ENCODE measurements at regions of chr2 and their contacts with region 1.

Region 1: GRCh38 chr2:237408335-237409000 is 5.5 kb downstream of the COL6A3 start:
- DNase-seq: no peak
- H3K4me3 ChIP-seq: no peak overlapping the region
- CTCF ChIP-seq: no peak
- POLR2A ChIP-seq: no peak

Region 2: DNA sequence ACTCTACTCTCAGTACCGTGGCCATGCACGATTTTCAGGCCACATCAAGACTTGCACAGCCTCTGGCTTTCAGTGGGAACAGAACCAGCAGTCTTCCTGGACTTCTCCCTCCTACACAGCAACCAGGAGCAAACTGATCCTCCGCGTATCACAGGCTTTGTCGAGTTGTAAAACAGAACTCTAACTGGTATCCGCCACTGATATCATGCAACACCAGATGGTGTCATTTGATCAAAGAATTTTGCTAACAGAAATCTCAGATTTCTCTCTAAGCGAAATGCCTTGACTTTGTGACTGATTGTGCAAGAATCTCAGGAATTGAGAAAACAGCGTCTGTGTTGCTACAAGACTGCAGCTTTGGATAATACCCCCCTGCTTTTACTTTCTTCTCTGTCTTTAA is 237.1 kb before region 1 on chr2:
- intact Hi-C with region 1: loop called (anchors 10 kb)
- DNase-seq: peak in 1 of 2 donors; percentile 52
- H3K4me3 ChIP-seq: no peak overlapping the region
- CTCF ChIP-seq: no peak
- POLR2A ChIP-seq: no peak

Region 3: DNA sequence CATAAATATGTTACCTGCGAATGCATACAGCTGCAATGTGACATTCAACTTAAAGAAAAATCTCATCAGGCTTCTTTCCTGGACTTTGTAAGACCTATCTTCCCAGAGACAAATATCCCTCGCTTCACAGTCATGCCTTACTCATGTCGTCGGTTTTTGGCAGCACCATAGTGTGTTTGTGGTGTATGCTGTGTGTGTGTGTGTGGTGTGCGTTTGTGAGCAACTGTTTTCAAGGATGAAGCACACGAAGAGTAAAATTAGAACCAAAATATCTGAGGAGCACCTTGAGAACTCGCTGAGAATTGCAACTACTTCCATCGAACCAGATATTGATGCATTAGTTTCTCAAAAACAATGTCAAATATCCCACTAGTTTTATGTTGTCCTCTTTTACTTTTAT is 1075.2 kb after region 1 on chr2:
- intact Hi-C with region 1: no loop called
- DNase-seq: no peak
- H3K4me3 ChIP-seq: no peak overlapping the region
- CTCF ChIP-seq: no peak
- POLR2A ChIP-seq: no peak